ENCODE measurements at regions of chr6 and their contacts with region 1.

Region 1: GRCh38 chr6:146543211-146543939 is at the start of gene RAB32:
- DNase-seq: peak; percentile 94
- H3K4me3 ChIP-seq: peak within 1 kb of the TSS; percentile 64
- H3K27ac ChIP-seq: peak within 1 kb of the TSS; percentile 98
- H3K4me1 ChIP-seq: no peaks in the 10 kb centered on the region
- H3K27me3 ChIP-seq: no peaks in the 10 kb centered on the region
- CTCF ChIP-seq: peak; percentile 72
- total RNA-seq, gene RAB32: 54.6 to 68.0 TPM

Region 2: GRCh38 chr6:146598772-146599405 is 55.5 kb after region 1 on chr6 and contains the start of gene ADGB:
- intact Hi-C with region 1: loop called (anchors 10 kb)
- DNase-seq: peak; percentile 83
- H3K4me3 ChIP-seq: peak within 1 kb of the TSS; percentile 29
- H3K27ac ChIP-seq: peak within 1 kb of the TSS; percentile 16
- H3K4me1 ChIP-seq: no peaks in the 10 kb centered on the region
- H3K27me3 ChIP-seq: no peaks in the 10 kb centered on the region
- CTCF ChIP-seq: no peak
- total RNA-seq, gene ADGB: 0.57 to 0.72 TPM

Region 3: DNA sequence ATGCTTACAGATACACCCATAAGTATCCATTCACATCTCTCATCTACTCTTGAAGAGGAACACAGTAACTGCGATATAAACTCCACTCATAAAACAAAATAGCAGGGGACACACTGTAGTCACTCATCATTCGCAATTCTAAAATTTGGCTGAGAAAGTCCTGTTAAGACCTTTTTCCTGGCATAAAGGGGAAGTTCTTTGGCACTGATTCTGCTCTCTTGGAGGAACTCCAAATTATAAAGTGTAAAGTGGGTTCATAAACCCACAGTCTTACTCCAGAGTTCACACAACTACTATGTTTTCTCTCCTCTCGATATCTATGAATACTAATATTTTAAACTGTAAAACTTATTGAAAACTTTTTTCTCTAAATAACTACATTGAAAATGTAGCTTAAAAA is 136.0 kb after region 1 on chr6:
- intact Hi-C with region 1: no loop called
- DNase-seq: no peak
- H3K4me3 ChIP-seq: no peak overlapping the region
- H3K27ac ChIP-seq: no peak overlapping the region
- H3K4me1 ChIP-seq: no peaks in the 10 kb centered on the region
- H3K27me3 ChIP-seq: no peaks in the 10 kb centered on the region
- CTCF ChIP-seq: no peak

Region 4: GRCh38 chr6:147341486-147341885 is 798.1 kb after region 1 on chr6:
- intact Hi-C with region 1: no loop called
- DNase-seq: peak; percentile 84
- H3K4me3 ChIP-seq: no peak overlapping the region
- H3K27ac ChIP-seq: peak overlapping the region; percentile 39
- H3K4me1 ChIP-seq: no peaks in the 10 kb centered on the region
- H3K27me3 ChIP-seq: no peaks in the 10 kb centered on the region
- CTCF ChIP-seq: no peak